GM23248 (cell line): ENCODE measurements at regions of chr2 and their contacts with region 1.

Region 1: DNA sequence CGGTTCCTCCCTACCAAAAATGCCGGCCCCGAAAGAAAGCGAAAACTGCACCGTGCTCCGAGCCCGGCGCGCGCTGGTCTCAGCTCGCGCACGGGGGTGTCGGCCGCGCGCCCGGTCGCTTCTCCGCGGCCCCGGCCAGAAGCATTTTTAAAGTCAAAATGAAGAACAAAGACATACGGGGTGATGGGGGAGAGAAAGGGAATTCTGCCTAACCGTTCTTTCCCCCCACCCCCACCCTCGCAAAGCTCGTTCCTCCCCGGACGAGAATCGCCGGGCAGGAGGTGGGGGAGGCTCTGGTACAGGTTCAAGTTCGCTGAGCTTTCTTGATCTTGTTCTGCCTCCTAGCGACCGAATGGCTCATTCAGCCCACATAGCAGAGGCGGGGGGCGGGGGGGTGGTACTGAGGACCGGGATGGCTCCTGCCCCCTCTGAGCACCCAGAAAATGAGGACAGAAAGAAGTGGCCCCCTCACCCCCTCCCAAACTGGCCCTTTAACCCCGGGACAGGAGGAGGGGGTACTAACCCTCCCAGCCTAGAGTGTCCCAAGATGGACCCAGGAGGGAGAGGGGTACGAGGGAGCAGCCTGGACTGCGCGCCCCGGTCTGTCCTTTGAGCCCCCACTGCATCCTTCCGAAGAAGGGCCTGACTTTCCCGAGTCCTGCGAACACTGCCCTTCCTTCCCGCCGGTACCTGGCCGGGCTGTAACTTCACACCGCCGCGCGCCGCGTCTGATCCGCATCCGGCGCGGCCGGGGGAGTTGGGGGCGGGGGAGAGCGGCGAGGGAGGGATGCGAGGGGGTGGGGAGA is 3.1 kb downstream of the BCL11A start:
- DNase-seq: peak; percentile 94
- H3K4me3 ChIP-seq: peak overlapping the region; percentile 82
- H3K27ac ChIP-seq: peak overlapping the region; percentile 34
- H3K4me1 ChIP-seq: peaks cover 8% of the 10 kb centered on the region; the same call in 1 of the 2 replicates
- H3K27me3 ChIP-seq: peaks cover under 1% of the 10 kb centered on the region; the same call in 1 of the 2 replicates

Region 2: DNA sequence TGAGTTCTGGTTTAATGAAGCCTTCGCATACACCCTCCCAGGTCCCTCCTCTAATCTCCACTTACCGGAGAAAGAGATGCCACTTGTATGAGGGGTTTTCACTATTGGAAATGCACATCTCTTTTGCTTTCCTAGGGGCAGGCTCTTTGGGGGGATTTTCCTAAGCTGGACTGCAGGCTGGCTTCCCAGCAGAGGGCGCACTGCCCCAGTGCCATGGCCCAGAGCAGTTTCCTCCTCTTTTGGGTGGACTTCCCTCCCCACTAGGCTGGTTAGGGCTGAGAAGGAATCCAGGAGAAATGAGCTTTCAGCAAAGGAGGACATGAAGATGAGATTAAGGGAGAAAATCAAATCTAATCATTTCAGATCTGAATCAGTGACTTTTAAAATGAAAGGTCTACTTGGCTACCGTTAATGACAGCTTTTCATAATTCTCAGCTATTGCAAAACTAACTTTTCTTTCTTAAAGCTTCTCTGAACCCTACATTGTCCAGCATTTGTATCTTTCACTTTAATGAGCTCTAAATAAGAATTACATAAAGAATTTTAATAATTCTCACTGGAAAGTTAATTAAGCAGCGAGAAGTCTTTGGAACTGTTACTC is 1525.1 kb before region 1 on chr2:
- in situ Hi-C with region 1: loop called (anchors 25 kb)
- DNase-seq: peak; percentile 42
- H3K4me3 ChIP-seq: no peak overlapping the region
- H3K27ac ChIP-seq: no peak overlapping the region
- H3K4me1 ChIP-seq: no peaks in the 10 kb centered on the region
- H3K27me3 ChIP-seq: peaks cover 25% of the 10 kb centered on the region